GM10248 (cell line): ENCODE measurements at regions of chr12 and their contacts with region 1.

Region 1: GRCh38 chr12:49264738-49265515 is at the start of gene TUBA1C:
- DNase-seq: peak; percentile 100
- CTCF ChIP-seq: no peak

Region 2: GRCh38 chr12:49079793-49080192 is 185.1 kb before region 1 on chr12:
- CTCF ChIA-PET with region 1: no interaction called
- POLR2A ChIA-PET with region 1: no interaction called
- DNase-seq: no peak
- CTCF ChIP-seq: no peak

Region 3: GRCh38 chr12:49219417-49220026 is 45.4 kb before region 1 on chr12:
- CTCF ChIA-PET with region 1: no interaction called
- POLR2A ChIA-PET with region 1: no interaction called
- DNase-seq: no peak
- CTCF ChIP-seq: no peak

Region 4: DNA sequence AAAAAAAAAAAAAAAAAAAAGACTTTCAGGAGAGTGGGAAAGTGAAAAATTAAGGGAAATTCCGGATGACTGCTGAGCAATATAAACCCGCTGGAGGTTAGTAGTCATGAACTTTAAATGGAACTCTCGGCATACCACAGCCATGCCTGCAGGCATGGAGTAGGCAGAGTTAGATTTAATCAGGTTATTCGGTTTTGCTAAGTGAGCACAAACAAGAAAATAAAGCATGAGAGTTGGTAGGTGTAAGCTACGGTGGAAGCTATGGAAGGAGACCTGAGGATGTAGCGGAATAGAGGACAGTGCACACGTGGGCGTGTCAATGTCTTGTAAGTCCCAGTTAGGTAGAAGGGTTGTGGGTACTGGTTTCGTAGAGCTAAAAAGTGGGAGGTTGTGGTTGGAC is 11.8 kb before region 1 on chr12:
- CTCF ChIA-PET with region 1: interaction called, 12 read pairs
- POLR2A ChIA-PET with region 1: interaction called, 5 read pairs
- DNase-seq: no peak
- CTCF ChIP-seq: no peak